ENCODE measurements at regions of chr5 and their contacts with region 1.

Region 1: DNA sequence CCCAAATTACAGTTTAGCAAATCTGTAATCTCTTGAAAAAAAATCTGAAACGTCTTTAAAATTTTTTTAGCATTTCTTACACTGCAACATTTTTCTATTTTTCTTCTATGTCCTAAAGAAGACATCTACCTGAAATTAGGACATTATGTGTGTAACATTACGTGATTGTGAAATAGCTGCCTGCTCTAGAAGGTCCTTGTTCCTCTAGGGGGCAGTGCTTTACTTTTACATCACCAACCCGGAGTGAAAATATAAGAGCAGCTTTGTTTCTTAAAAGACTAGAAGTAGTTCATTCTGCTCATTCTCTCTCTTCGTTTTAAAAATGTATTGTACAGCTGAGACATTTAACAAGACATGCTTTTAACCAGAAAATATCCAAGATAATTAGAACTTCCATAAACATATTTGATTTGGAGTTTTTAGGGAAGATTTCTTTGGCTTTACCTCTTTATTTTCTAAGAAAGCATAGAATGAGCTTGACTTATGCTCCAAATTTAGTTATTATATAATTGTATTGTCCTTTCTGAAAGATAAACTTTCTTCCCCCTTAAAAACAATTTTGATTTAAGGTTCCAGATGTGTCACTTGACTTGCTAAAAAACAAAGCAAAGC is 48.1 kb upstream of the RIOK2 start:
- DNase-seq: no peak
- ATAC-seq: peak; percentile 94

Region 2: DNA sequence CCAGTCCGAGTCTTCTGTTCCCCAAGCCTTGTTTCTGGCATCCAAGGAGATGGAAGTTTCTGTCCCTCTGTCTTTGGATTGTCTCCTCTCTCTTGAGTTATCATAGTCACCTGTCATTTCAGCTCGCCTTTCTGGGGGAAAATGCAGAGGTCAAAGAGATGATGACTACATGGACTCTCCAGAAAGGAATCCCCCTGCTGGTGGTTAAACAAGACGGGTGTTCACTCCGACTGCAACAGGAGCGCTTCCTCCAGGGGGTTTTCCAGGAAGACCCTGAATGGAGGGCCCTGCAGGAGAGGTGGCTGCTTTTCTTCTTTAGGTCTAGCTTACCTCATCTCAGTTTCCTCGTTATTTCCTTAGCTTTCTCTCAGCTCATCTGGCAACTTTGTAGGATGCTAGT is 329.7 kb before region 1 on chr5:
- intact Hi-C with region 1: no loop called
- DNase-seq: no peak
- ATAC-seq: no peak

Region 3: DNA sequence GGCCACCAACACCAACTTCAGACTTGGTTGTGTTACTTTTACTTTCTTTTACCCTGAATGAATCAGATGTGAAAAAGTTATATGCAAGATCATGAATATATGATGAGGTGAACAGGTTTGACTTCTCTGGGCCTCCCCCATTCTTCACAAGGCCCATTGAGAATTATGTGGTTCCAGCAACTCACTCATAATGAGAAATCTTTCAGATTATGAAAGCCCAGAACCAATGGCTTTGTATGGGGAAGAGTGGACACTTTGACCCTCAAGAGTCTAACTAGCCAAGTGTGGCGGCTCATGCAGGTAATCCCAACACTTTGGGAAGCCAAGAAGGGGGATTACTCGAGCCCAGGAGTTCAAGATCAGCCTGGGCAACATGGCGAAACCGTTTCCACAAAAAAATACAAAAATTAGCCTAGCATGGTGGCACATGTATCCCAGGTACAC is 311.4 kb before region 1 on chr5:
- intact Hi-C with region 1: no loop called
- DNase-seq: no peak
- ATAC-seq: no peak

Region 4: DNA sequence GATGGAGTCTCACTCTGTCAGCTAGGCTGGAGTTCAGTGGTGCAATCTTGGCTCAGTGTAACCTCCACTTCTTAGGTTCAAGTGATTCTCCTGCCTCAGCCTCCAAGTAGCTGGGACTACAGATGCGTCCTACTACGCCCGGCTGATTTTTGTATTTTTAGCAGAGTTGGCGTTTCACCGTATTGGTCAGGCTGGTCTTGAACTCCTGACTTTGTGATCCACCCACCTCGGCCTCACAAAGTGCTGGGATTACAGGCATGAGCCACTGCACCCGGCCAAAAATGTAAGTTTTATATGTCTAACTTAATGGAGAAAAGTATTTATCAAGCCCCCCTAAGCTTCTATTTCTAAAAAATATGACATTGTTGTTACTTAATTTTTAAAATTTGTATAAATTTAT is 50.1 kb after region 1 on chr5:
- intact Hi-C with region 1: no loop called
- DNase-seq: no peak
- ATAC-seq: no peak

Region 5: DNA sequence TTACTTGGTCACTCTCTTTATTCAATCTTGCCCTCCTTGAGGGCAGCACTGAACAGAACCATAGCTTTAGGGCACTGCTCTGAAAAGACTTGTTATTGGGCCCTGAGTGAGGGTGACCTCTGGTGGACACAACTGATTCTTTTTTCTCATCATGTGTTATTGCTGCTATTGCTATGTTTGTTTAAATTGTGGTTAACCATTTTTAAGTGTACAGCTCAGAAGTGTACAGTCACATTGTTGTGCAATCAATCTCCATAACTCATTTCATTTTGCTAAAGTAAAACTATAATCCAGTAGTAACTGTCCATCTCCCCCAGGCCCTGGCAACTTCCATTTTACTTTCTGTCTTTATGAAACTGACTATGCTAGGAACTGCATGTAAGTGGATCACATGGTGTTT is 303.0 kb after region 1 on chr5:
- intact Hi-C with region 1: loop called (anchors 5 kb)
- DNase-seq: no peak
- ATAC-seq: peak; percentile 74

Region 6: DNA sequence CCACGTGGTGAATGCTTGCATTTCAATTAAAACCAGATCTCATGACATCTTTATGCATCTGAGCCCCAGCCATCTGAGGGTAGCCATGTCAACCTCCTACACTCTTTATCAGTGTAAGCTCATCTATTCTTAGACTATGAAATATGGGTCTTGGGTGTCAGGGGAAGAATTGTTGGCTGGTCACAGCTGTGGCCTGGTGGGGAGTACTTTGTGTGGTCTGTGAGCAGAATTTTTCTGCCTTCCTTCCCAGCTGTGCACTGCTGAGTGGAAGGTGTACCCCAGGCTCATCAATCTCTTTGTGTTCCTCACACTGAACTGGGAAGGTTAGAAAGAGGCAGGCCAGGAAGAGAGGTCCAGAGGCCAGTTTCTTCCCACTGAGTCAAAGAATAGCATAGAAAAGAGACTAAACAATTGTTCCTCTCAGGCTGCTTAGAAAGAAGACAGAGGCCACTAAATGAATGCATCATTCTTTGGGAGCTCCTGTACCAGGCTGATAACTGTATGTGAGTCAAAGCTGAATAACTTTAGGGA is 1339.6 kb after region 1 on chr5:
- intact Hi-C with region 1: no loop called
- DNase-seq: no peak
- ATAC-seq: no peak

Region 7: DNA sequence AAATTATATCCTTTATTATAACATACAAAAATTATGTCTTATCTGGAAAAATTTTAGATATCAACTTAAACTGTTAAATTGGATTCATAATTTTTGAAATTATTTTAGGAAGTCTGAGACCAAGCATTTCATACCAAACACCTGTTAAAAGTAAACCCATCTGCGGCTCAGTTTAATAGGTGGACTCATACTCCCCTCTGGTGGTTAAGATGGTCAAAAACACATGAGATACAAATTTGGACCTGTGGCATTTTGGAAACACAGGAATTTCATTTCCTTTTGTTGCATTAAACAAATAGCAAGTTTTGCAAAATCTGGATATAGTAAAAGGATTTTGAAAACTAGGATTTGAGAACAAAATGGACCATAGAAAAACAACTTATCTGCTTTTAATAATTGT is 1596.0 kb after region 1 on chr5:
- intact Hi-C with region 1: loop called (anchors 5 kb)
- DNase-seq: no peak
- ATAC-seq: no peak

Measured in Right ventricle myocardium superior (tissue), 1 donor.